Activated CD8-positive, alpha-beta T cell treated with anti-CD3 and anti-CD28 coated beads, Interleukin-2, amount 10 ng/mL, durations not matched to agents 7 days and 5 days (primary cell): ENCODE measurements at regions of chr13 and their contacts with region 1.

Region 1: GRCh38 chr13:39942552-39943273 is 287.3 kb downstream of the COG6 start:
- DNase-seq: peak; percentile 80
- ATAC-seq: peak; percentile 98
- H3K4me3 Mint-ChIP-seq: no peak overlapping the region
- H3K27ac Mint-ChIP-seq: no peak overlapping the region
- H3K4me1 Mint-ChIP-seq: peaks cover 5% of the 10 kb centered on the region
- H3K27me3 Mint-ChIP-seq: no peaks in the 10 kb centered on the region

Region 2: GRCh38 chr13:39623466-39623865 is 319.2 kb before region 1 on chr13:
- CTCF ChIA-PET with region 1: no interaction called
- POLR2A ChIA-PET with region 1: no interaction called
- DNase-seq: no peak
- ATAC-seq: no peak
- H3K4me3 Mint-ChIP-seq: no peak overlapping the region
- H3K27ac Mint-ChIP-seq: no peak overlapping the region
- H3K4me1 Mint-ChIP-seq: no peaks in the 10 kb centered on the region
- H3K27me3 Mint-ChIP-seq: peaks cover 15% of the 10 kb centered on the region

Region 3: GRCh38 chr13:39684531-39685137 is 258.1 kb before region 1 on chr13:
- CTCF ChIA-PET with region 1: interaction called, 12 read pairs
- POLR2A ChIA-PET with region 1: no interaction called
- DNase-seq: no peak
- ATAC-seq: no peak
- H3K4me3 Mint-ChIP-seq: no peak overlapping the region
- H3K27ac Mint-ChIP-seq: no peak overlapping the region
- H3K4me1 Mint-ChIP-seq: peaks cover 22% of the 10 kb centered on the region
- H3K27me3 Mint-ChIP-seq: no peaks in the 10 kb centered on the region

Region 4: GRCh38 chr13:39959497-39960144 is 16.9 kb after region 1 on chr13:
- CTCF ChIA-PET with region 1: interaction called, 59 read pairs
- POLR2A ChIA-PET with region 1: no interaction called
- DNase-seq: no peak
- ATAC-seq: no peak
- H3K4me3 Mint-ChIP-seq: no peak overlapping the region
- H3K27ac Mint-ChIP-seq: no peak overlapping the region
- H3K4me1 Mint-ChIP-seq: peaks cover 42% of the 10 kb centered on the region
- H3K27me3 Mint-ChIP-seq: no peaks in the 10 kb centered on the region

Region 5: GRCh38 chr13:39967199-39967959 is 24.7 kb after region 1 on chr13:
- CTCF ChIA-PET with region 1: interaction called, 12 read pairs
- POLR2A ChIA-PET with region 1: no interaction called
- DNase-seq: no peak
- ATAC-seq: no peak
- H3K4me3 Mint-ChIP-seq: no peak overlapping the region
- H3K27ac Mint-ChIP-seq: no peak overlapping the region
- H3K4me1 Mint-ChIP-seq: no peaks in the 10 kb centered on the region
- H3K27me3 Mint-ChIP-seq: peaks cover 9% of the 10 kb centered on the region

Region 6: DNA sequence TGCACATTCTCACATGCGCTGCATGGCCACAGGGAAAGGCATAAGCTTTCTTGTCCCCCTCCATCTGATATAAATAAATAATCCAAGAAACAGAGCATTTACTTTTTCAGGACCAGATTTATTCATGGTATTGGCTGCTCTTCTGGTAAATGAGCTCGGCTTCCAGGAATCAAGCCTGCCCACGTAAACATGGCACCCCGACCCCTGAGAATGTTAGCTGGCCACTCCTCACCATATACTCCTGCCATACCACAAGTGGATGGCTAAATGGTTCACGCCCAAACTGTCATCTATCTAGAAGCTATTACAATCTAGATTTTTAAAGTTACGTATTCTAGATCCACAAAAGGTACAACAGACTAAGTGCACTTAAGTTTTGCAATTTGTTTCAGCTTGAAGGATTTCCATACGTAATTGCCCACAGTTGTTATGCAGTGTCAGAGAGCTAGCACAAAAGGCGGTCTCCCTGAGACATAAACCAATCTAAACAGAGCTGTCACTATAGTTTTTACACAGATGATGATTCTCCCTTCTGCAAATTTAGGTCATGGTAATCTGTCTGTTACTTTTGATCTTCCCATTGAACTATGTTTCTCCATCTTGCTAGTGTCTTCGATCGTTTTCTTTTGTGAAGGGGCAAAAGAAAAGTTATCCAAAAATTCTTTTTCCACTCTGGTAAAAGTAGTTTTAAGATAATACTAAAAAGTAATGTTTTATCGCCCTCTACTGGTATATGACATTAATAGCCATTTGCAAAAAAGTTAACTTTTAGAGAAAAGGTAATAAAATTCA is 739.9 kb after region 1 on chr13:
- CTCF ChIA-PET with region 1: interaction called, 26 read pairs
- POLR2A ChIA-PET with region 1: no interaction called
- DNase-seq: no peak
- ATAC-seq: no peak
- H3K4me3 Mint-ChIP-seq: no peak overlapping the region
- H3K27ac Mint-ChIP-seq: peak overlapping the region; percentile 14
- H3K4me1 Mint-ChIP-seq: peaks cover 7% of the 10 kb centered on the region
- H3K27me3 Mint-ChIP-seq: no peaks in the 10 kb centered on the region